ENCODE measurements at regions of chr2 and their contacts with region 1.

Region 1: GRCh38 chr2:55268907-55269644 is at the start of gene MTIF2:
- DNase-seq: peak; percentile 88 to 99 (median 93)

Region 2: DNA sequence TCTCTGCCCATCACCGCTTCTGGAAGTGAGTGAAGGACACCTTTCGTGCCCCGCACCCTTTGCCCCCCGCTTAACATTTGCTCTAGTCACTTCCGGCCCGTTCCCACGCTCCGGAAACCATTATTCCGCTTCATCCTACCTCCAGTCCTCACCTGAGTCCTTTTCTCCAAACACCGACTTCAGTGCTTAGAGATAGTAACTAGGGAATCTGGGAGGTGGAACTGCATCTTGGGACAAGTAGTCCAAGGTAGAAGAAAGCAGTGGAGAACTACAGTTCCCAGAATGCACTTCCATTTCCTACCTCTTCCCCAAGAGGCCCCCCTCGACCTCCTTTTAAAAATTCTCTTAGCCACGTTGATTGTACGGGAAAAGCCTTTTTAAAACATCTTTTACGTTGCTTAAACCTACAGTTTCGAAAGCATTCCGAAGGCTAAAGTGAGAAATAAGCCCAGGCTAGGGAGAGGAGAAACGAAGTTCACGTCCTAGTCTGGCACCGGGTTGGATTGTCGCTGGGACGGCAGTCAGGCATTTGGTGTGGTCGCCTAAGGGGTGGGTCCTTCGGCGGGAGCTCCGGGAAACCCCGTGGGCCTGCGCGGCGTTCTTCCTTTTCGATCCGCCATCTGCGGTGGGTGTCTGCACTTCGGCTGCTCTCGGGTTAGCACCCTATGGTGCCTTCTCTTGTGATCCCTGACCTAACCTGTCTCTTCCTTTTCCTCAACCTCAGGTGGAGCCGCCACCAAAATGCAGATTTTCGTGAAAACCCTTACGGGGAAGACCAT is 36.8 kb before region 1 on chr2 and contains the starts of genes CLHC1 and RPS27A:
- intact Hi-C with region 1: loop called (anchors 5 kb)
- DNase-seq: peak; percentile 85 to 98 (median 90)

Region 3: GRCh38 chr2:55431982-55432627 is 163.0 kb after region 1 on chr2:
- intact Hi-C with region 1: loop called (anchors 2 kb)
- DNase-seq: no peak